PC-9 (cell line): ENCODE measurements at regions of chr11 and their contacts with region 1.

Region 1: DNA sequence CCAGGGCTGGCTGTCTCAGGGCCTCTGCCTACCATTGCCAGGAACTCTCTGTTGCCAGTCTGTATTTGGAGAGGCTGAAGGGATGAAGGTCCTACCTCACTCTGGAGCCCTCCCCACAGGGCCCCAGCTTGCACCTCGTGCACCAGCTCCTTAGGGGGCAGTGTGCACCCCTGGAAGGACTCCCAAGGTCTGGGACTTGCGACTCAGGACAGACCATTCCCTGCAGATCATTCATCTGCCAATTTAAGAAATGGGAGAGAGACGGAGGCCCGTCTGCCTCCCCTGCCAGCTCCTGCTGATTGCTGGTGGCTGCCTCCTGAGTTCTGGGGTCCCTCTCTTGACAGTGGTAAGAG is 27.5 kb upstream of the MALAT1 start:
- DNase-seq: peak; percentile 61 to 78
- H3K4me3 ChIP-seq: no peak overlapping the region
- H3K27ac ChIP-seq: peak overlapping the region; percentile 95
- H3K4me1 ChIP-seq: peaks cover 66% of the 10 kb centered on the region
- H3K27me3 ChIP-seq: no peaks in the 10 kb centered on the region
- CTCF ChIP-seq: peak; percentile 61

Region 2: GRCh38 chr11:65382033-65382807 is 89.2 kb before region 1 on chr11 and contains the start of gene SLC25A45:
- CTCF ChIA-PET with region 1: interaction called, 4 read pairs
- POLR2A ChIA-PET with region 1: interaction called, 3 read pairs
- intact Hi-C with region 1: loop called (anchors 1 kb)
- DNase-seq: peak; percentile 97 to 98
- H3K4me3 ChIP-seq: peak within 1 kb of the TSS; percentile 48; the same call in 1 of the 2 replicates
- H3K27ac ChIP-seq: peak within 1 kb of the TSS; percentile 93
- H3K4me1 ChIP-seq: peaks cover 64% of the 10 kb centered on the region
- H3K27me3 ChIP-seq: no peaks in the 10 kb centered on the region
- CTCF ChIP-seq: peak; percentile 79
- total RNA-seq, gene SLC25A45: 9.5 and 9.8 TPM in 2 replicates

Region 3: DNA sequence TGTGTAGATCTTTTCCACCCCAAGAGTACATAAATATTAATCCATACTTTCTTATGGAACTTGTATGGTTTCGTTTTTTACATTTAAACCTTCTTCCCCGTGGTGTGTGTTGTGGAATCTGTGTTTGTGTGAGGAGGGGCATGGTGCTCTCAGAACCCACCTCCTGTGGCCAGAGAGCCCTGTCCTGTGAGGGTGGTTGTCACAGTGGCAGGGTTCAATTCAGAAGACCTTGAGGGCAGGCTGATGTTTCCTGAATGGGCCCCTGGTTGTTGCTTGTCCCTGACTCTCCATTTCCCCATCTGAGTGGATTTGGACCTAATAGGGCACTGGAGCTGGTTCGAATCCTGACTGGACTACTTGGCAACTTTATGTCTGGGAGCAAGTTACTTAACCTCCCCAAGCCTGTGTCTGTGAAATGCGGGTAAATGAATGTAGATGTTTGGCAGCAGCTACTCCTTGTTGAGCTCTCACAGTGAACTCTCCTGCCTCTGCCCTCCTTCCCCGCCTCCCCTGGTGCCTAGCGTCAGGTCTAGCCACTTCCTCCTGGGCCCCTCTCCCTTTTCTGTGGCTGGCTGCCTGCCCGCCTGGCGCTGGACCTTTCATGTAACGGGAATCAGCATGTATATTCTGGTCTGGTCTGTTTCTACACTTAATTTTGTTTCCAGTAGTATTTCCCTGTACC is 41.5 kb before region 1 on chr11:
- CTCF ChIA-PET with region 1: interaction called, 19 read pairs
- POLR2A ChIA-PET with region 1: interaction called, 3 read pairs
- intact Hi-C with region 1: no loop called
- DNase-seq: peak in 1 of 2 experiments; percentile 56
- H3K4me3 ChIP-seq: no peak overlapping the region
- H3K27ac ChIP-seq: peak overlapping the region; percentile 100
- H3K4me1 ChIP-seq: peaks cover 54% of the 10 kb centered on the region
- H3K27me3 ChIP-seq: no peaks in the 10 kb centered on the region
- CTCF ChIP-seq: no peak

Region 4: DNA sequence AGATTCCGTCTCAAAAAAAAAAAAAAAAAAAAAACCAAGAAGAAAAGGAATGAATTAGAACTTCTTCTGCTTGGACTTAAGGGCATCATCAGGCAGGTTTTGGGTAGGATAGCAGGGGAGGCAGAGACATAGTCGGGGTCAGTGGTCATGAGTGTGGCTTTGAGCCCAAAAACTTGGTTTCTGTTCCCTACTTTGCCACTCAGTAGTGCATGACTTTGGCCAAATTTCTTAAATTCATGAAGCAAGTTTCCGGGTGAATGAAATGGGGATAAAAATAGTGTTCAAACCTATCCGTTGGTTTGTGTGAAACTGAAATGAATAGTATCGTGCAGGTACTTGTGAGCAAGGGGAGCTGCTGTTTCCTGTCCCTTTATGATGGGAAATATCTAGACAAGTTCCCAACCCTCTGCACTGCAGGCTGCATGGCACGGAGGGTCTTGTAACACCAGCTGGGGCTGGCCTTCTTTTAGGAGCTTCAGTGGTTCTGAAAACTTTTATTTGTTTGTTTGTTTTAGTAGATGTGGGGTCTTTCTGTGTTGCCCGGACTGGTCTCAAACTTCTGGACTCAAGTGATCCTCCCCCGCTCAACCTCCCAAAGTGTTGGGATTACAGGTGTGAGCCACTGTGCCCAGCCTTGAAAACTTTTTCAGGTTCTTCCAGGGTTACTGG is 30.4 kb before region 1 on chr11:
- CTCF ChIA-PET with region 1: no interaction called
- POLR2A ChIA-PET with region 1: interaction called, 13 read pairs
- intact Hi-C with region 1: no loop called
- DNase-seq: peak; percentile 22 to 35
- H3K4me3 ChIP-seq: no peak overlapping the region
- H3K27ac ChIP-seq: peak overlapping the region; percentile 64
- H3K4me1 ChIP-seq: peaks cover 50% of the 10 kb centered on the region
- H3K27me3 ChIP-seq: no peaks in the 10 kb centered on the region
- CTCF ChIP-seq: no peak

Region 5: GRCh38 chr11:65487413-65488272 is 16.3 kb after region 1 on chr11:
- CTCF ChIA-PET with region 1: interaction called, 18 read pairs
- POLR2A ChIA-PET with region 1: interaction called, 34 read pairs
- intact Hi-C with region 1: no loop called
- DNase-seq: peak; percentile 98 to 99
- H3K4me3 ChIP-seq: no peak overlapping the region
- H3K27ac ChIP-seq: peak overlapping the region; percentile 88
- H3K4me1 ChIP-seq: peaks cover 79% of the 10 kb centered on the region
- H3K27me3 ChIP-seq: no peaks in the 10 kb centered on the region
- CTCF ChIP-seq: no peak